Caco-2 (cell line): ENCODE measurements at regions of chr11 and their contacts with region 1.

Region 1: GRCh38 chr11:129922674-129923073 is 27.3 kb upstream of the NFRKB start:
- DNase-seq: peak in 1 of 2 experiments; percentile 29
- H3K4me3 ChIP-seq: no peak overlapping the region
- H3K4me3 Mint-ChIP-seq: no peak overlapping the region
- H3K27ac Mint-ChIP-seq: no peak overlapping the region
- H3K4me1 ChIP-seq: peaks cover 5% of the 10 kb centered on the region
- H3K4me1 Mint-ChIP-seq: peaks cover 6% of the 10 kb centered on the region
- H3K27me3 ChIP-seq: no peaks in the 10 kb centered on the region
- H3K27me3 Mint-ChIP-seq: no peaks in the 10 kb centered on the region
- CTCF ChIP-seq: peak in 1 of 2 experiments; percentile 35

Region 2: DNA sequence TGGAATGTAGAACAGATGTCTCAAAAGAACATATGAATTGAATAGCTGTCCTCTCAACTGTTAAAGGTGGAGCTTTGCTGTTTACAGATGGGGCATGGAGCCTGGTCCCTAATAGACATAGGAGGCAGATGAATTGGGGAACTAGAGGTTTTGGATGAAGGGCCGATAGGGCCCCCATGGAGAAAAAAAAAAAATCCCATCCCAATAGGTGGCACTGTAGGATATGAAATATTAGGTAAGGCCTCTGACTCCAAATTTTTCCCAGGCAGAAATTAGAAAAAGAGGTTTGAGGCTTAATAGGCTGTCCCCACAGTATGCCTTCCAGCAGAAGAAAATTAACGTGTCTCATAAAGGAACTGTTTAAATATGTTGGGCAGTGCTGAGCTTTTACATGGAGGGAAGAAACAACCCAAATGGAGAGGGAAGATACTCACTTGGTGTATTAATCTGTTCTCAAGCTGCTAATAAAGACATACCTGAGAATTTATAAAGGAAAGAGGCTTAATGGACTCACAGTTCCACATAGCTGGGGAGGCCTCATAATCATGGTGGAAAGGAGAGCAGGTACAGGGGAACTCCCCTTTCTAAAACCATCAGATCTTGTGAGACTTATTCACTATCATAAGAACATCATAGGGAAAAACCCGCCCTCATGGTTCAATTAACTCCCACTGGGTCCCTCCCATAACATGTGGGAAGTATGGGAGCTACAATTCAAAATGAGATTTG is 137.1 kb before region 1 on chr11:
- CTCF ChIA-PET with region 1: no interaction called
- POLR2A ChIA-PET with region 1: no interaction called
- intact Hi-C with region 1: loop called (anchors 1 kb)
- DNase-seq: peak in 1 of 2 experiments; percentile 66
- H3K4me3 ChIP-seq: no peak overlapping the region
- H3K4me3 Mint-ChIP-seq: no peak overlapping the region
- H3K27ac Mint-ChIP-seq: peak overlapping the region; percentile 4
- H3K4me1 ChIP-seq: peaks cover 18% of the 10 kb centered on the region
- H3K4me1 Mint-ChIP-seq: peaks cover 18% of the 10 kb centered on the region
- H3K27me3 ChIP-seq: no peaks in the 10 kb centered on the region
- H3K27me3 Mint-ChIP-seq: no peaks in the 10 kb centered on the region
- CTCF ChIP-seq: peak; percentile 2 to 52

Region 3: DNA sequence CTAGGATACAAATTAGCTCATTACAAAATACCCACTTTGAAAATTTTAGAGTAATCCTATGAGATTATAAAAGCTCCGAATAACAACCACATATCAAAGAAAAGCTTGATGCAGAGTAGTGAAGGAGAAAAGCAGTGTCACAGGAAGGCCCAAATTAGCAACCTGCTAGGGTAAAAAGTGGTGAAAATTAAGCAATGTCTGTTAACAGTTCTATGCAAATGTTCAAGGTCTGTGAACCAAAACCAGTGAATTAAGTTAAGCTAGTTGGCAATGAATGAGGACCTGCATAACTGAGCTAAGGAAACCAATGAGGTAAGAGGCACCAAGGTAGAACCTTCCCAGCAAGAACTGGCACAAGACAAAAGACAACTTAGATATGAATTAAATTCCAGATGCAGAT is 50.4 kb after region 1 on chr11:
- CTCF ChIA-PET with region 1: interaction called, 10 read pairs
- POLR2A ChIA-PET with region 1: no interaction called
- intact Hi-C with region 1: no loop called
- DNase-seq: no peak
- H3K4me3 ChIP-seq: no peak overlapping the region
- H3K4me3 Mint-ChIP-seq: no peak overlapping the region
- H3K27ac Mint-ChIP-seq: no peak overlapping the region
- H3K4me1 ChIP-seq: peaks cover 23% of the 10 kb centered on the region
- H3K4me1 Mint-ChIP-seq: peaks cover 34% of the 10 kb centered on the region
- H3K27me3 ChIP-seq: no peaks in the 10 kb centered on the region
- H3K27me3 Mint-ChIP-seq: no peaks in the 10 kb centered on the region
- CTCF ChIP-seq: no peak

Region 4: GRCh38 chr11:129992161-129992944 is 69.7 kb after region 1 on chr11:
- CTCF ChIA-PET with region 1: interaction called, 3 read pairs
- POLR2A ChIA-PET with region 1: no interaction called
- intact Hi-C with region 1: loop called (anchors 2 kb)
- DNase-seq: peak; percentile 80 to 82
- H3K4me3 ChIP-seq: no peak overlapping the region
- H3K4me3 Mint-ChIP-seq: no peak overlapping the region
- H3K27ac Mint-ChIP-seq: peak overlapping the region; percentile 35
- H3K4me1 ChIP-seq: peaks cover 13% of the 10 kb centered on the region
- H3K4me1 Mint-ChIP-seq: peaks cover 28% of the 10 kb centered on the region
- H3K27me3 ChIP-seq: no peaks in the 10 kb centered on the region
- H3K27me3 Mint-ChIP-seq: no peaks in the 10 kb centered on the region
- CTCF ChIP-seq: peak in 1 of 2 experiments; percentile 84

Region 5: GRCh38 chr11:130181295-130182272 is 258.9 kb after region 1 on chr11:
- CTCF ChIA-PET with region 1: no interaction called
- POLR2A ChIA-PET with region 1: no interaction called
- intact Hi-C with region 1: loop called (anchors 1 kb)
- DNase-seq: peak; percentile 94 to 99
- H3K4me3 ChIP-seq: peak overlapping the region; percentile 32
- H3K4me3 Mint-ChIP-seq: peak overlapping the region; percentile 58
- H3K27ac Mint-ChIP-seq: peak overlapping the region; percentile 92
- H3K4me1 ChIP-seq: peaks cover 56% of the 10 kb centered on the region
- H3K4me1 Mint-ChIP-seq: peaks cover 56% of the 10 kb centered on the region
- H3K27me3 ChIP-seq: no peaks in the 10 kb centered on the region
- H3K27me3 Mint-ChIP-seq: no peaks in the 10 kb centered on the region
- CTCF ChIP-seq: peak in 1 of 2 experiments; percentile 8

Region 6: GRCh38 chr11:130536106-130537040 is 613.7 kb after region 1 on chr11:
- CTCF ChIA-PET with region 1: no interaction called
- POLR2A ChIA-PET with region 1: no interaction called
- intact Hi-C with region 1: no loop called
- DNase-seq: no peak
- H3K4me3 ChIP-seq: no peak overlapping the region
- H3K4me3 Mint-ChIP-seq: no peak overlapping the region
- H3K27ac Mint-ChIP-seq: no peak overlapping the region
- H3K4me1 ChIP-seq: no peaks in the 10 kb centered on the region
- H3K4me1 Mint-ChIP-seq: no peaks in the 10 kb centered on the region
- H3K27me3 ChIP-seq: no peaks in the 10 kb centered on the region
- H3K27me3 Mint-ChIP-seq: peaks cover 34% of the 10 kb centered on the region
- CTCF ChIP-seq: no peak

Region 7: GRCh38 chr11:131109257-131109656 is 1186.6 kb after region 1 on chr11:
- CTCF ChIA-PET with region 1: no interaction called
- POLR2A ChIA-PET with region 1: no interaction called
- intact Hi-C with region 1: no loop called
- DNase-seq: no peak
- H3K4me3 ChIP-seq: no peak overlapping the region
- H3K4me3 Mint-ChIP-seq: no peak overlapping the region
- H3K27ac Mint-ChIP-seq: no peak overlapping the region
- H3K4me1 ChIP-seq: no peaks in the 10 kb centered on the region
- H3K4me1 Mint-ChIP-seq: no peaks in the 10 kb centered on the region
- H3K27me3 ChIP-seq: no peaks in the 10 kb centered on the region
- H3K27me3 Mint-ChIP-seq: peaks cover 4% of the 10 kb centered on the region
- CTCF ChIP-seq: no peak